Sigmoid colon (tissue), 7 donors: ENCODE measurements at regions of chr12 and their contacts with region 1.

Region 1: GRCh38 chr12:40946612-40947194 is 241.4 kb upstream of the PDZRN4 start:
- DNase-seq: no peak
- H3K4me3 ChIP-seq: no peak overlapping the region
- H3K27ac ChIP-seq: no peak overlapping the region
- H3K4me1 ChIP-seq: no peaks in the 10 kb centered on the region
- H3K27me3 ChIP-seq: no peaks in the 10 kb centered on the region
- CTCF ChIP-seq: peak; percentile 46 to 66 (median 58)
- EP300 ChIP-seq: no peak
- POLR2A ChIP-seq: no peak

Region 2: GRCh38 chr12:40439771-40440492 is 506.8 kb before region 1 on chr12:
- intact Hi-C with region 1: no loop called
- DNase-seq: no peak
- H3K4me3 ChIP-seq: no peak overlapping the region
- H3K27ac ChIP-seq: no peak overlapping the region
- H3K4me1 ChIP-seq: no peaks in the 10 kb centered on the region
- H3K27me3 ChIP-seq: no peaks in the 10 kb centered on the region
- CTCF ChIP-seq: no peak
- EP300 ChIP-seq: no peak
- POLR2A ChIP-seq: no peak

Region 3: DNA sequence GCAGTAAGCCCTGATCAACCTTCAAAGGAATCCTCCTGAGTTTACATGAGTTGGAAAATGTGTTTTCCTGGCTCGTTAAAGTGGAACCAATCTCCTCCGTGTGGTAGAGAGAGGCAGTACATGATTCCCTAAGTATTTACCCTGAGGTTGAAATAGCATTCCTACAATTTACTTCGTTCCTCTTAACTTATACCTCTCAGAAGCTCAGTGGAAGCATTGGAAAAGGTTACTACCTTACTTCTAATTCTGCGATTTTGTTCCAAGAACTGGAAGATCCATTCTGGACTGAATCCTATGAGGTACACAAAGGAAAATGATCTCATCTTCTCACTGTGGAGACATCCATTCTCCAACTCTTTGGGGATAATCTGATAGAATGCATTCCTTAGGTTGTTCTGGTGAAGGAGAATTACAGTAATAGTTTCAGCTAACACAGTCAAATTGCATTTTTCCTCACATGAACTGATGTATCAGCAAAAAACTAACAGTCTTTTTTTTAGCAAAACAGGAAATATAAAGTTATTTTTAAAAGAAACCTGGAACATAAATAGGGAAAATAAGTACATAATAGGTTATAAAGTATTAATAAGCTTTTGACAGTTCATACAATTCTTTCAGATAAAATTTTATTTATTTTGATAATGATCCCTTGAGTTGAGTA is 717.0 kb after region 1 on chr12:
- intact Hi-C with region 1: loop called (anchors 5 kb)
- DNase-seq: no peak
- H3K4me3 ChIP-seq: no peak overlapping the region
- H3K27ac ChIP-seq: no peak overlapping the region
- H3K4me1 ChIP-seq: no peaks in the 10 kb centered on the region
- H3K27me3 ChIP-seq: no peaks in the 10 kb centered on the region
- CTCF ChIP-seq: peak in 2 of 4 experiments; percentile 12 to 51
- EP300 ChIP-seq: no peak
- POLR2A ChIP-seq: no peak